ENCODE measurements at regions of chr15 and their contacts with region 1.

Region 1: DNA sequence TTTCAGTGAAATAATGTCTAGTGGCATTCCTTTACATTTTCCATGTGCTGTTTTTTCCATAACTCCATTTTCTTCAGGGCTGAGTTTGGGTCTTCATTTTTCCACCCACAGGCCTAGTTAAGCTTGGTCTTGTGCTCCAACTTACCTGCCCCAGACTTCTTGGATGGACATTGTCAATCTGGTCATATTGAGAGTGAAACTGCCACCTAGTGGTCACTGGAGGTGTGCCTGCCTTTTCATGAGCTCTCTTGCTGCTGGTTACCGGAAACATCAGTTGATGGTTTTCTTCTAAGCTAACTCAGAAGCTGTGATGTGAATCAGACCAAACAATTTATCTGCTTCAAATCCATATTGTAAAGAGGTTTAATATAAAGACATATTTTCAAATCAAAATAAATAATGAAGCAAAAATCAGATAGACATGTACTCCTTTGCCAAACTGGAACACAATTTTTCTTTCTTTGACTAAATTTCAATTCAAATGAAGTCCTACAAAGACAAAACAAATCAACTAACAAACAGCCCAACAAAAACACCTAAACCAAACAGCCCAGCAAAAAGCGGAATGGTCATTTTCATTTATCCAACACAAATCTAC is 135.1 kb upstream of the RASGRP1 start:
- DNase-seq: peak; percentile 83
- H3K4me3 Mint-ChIP-seq: no peak overlapping the region
- H3K27ac Mint-ChIP-seq: peak overlapping the region; percentile 41
- H3K4me1 Mint-ChIP-seq: peaks cover 47% of the 10 kb centered on the region
- H3K27me3 Mint-ChIP-seq: no peaks in the 10 kb centered on the region

Region 2: DNA sequence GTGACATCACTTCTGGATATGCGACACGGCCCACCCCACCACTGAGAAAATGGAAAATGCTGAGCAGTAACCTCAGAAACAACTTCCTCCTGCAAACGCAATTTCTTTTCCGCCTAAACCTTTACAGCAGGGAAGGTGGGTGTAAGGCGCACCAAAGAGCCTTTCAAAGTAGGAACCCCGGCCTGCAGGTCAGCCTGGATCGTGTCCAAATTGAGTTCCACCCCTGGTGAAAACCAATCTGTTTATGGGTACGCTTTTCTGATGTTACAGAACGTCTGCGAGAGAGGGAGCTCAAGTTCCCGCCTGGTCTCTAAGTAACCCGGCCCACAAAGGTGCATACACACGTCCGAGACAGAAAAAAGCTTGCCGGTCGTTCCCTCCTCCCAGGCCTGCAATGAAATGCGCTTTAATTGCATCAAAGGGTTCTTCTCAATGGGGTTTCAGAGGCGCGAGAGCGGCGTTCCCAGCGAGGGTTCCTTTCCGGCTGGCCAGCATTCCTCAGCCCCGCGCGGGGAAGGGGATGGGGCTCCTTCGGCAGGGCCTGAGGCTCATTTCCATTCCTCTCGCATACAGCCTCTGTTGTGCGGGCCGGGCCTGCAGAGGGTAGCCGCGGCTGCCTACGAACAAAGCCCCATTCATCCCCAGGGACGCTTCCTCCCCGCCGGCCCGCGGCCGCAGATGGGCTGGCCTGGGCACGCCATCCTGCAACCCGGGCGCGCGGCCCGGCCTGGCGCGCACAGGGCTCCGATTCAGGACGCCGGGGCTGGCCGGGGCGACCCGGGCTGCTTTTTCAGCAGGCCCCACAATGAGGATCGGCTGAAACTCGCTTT is 627.2 kb before region 1 on chr15:
- CTCF ChIA-PET with region 1: no interaction called
- intact Hi-C with region 1: loop called (anchors 10 kb)
- DNase-seq: peak; percentile 47
- H3K4me3 Mint-ChIP-seq: peak overlapping the region; percentile 44
- H3K27ac Mint-ChIP-seq: no peak overlapping the region
- H3K4me1 Mint-ChIP-seq: peaks cover 34% of the 10 kb centered on the region
- H3K27me3 Mint-ChIP-seq: peaks cover 65% of the 10 kb centered on the region

Region 3: DNA sequence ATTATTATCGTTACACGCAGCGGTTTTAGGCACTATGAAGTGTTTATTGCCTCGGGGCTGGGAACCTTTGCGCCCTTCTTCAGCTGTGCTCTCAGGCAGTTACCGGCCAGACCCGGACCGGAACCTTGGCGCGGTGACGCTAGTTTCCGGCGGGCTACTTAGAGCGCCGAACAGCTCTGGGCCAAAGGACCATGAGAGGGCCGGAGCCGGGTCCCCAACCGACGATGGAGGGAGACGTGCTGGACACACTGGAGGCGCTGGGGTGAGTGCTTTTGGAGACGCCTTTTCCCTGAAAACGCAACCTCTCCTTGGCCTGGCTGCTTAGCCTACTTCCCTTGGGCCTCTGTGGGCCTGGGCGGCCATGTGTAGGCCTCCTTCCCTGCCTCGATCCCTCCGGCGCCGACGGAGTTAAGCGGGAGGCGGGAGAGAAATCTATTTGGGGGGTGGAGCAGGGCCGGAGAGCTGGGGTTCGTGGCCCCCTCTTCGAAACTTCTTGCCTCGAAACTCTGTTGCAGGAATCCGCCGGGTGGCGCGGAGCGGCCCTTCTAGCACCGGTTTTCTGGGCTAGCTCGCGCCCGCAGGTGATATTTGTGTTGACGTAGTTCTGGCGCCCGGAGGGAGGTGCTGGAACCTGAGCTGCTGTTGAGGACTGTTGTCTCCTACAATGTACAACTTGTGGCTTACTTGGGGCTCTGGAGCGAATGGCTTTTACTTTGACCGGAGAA is 245.6 kb before region 1 on chr15 and contains the start of gene FAM98B:
- CTCF ChIA-PET with region 1: interaction called, 16 read pairs
- intact Hi-C with region 1: no loop called
- DNase-seq: peak; percentile 92
- H3K4me3 Mint-ChIP-seq: peak within 1 kb of the TSS; percentile 94
- H3K27ac Mint-ChIP-seq: peak within 1 kb of the TSS; percentile 88
- H3K4me1 Mint-ChIP-seq: peaks cover 28% of the 10 kb centered on the region
- H3K27me3 Mint-ChIP-seq: no peaks in the 10 kb centered on the region
- total RNA-seq, gene FAM98B: 42.0 to 47.4 TPM

Region 4: DNA sequence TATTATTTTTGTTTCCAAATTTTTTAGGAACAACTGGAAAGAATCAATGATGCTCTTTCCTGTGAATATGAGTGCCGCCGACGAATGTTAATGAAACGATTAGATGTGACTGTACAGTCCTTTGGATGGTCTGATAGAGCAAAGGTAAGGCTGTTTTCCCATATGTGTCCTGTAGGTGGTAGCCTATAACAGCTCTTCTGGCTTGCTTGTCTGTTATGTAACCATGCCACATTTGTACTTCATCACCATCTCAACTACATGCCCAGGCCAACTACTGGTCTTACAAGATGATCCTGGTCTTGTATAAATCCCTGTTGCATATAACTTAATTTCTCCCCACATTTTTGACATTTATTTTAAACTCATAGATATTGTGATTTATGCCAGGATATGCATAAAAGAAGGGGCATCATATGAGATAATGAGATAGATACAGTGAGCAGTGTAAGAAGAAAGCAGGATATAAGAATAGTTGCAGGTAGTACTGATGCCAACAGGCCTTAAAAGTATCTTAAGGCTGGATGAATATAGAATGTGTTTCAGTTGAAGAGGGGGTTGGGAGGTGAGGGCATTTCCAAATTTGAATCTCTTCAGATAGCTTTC is 225.5 kb before region 1 on chr15:
- CTCF ChIA-PET with region 1: interaction called, 29 read pairs
- intact Hi-C with region 1: loop called (anchors 2 kb)
- DNase-seq: peak; percentile 30
- H3K4me3 Mint-ChIP-seq: no peak overlapping the region
- H3K27ac Mint-ChIP-seq: peak overlapping the region; percentile 55
- H3K4me1 Mint-ChIP-seq: peaks cover 4% of the 10 kb centered on the region
- H3K27me3 Mint-ChIP-seq: no peaks in the 10 kb centered on the region

Region 5: DNA sequence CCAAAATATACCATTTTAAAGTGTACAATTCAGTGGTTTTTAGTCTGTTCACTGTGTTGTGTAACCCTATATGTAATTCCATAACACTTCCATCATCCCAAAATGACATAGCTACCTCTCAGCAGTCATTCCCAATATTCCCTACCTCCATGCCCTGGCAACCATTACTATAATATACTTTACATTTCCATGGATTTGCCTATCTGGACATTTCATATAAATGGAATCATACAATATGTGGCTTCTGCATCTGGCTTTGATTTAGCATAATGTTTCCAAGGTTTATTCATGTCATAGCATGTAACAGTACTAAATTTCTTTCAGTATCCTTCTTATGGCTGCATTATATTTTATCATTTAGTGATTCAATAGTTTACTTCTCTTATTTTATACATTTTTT is 220.5 kb before region 1 on chr15:
- CTCF ChIA-PET with region 1: interaction called, 29 read pairs
- intact Hi-C with region 1: loop called (anchors 2 kb)
- DNase-seq: no peak
- H3K4me3 Mint-ChIP-seq: no peak overlapping the region
- H3K27ac Mint-ChIP-seq: no peak overlapping the region
- H3K4me1 Mint-ChIP-seq: peaks cover 27% of the 10 kb centered on the region
- H3K27me3 Mint-ChIP-seq: no peaks in the 10 kb centered on the region

Region 6: GRCh38 chr15:38490242-38490922 is 209.3 kb before region 1 on chr15:
- CTCF ChIA-PET with region 1: interaction called, 10 read pairs
- intact Hi-C with region 1: no loop called
- DNase-seq: no peak
- H3K4me3 Mint-ChIP-seq: no peak overlapping the region
- H3K27ac Mint-ChIP-seq: peak overlapping the region; percentile 30
- H3K4me1 Mint-ChIP-seq: peaks cover 46% of the 10 kb centered on the region
- H3K27me3 Mint-ChIP-seq: no peaks in the 10 kb centered on the region